ENCODE measurements at regions of chr9 and their contacts with region 1.

Region 1: GRCh38 chr9:4548811-4549725 is 58.8 kb downstream of the SLC1A1 start:
- DNase-seq: peak; percentile 10
- ATAC-seq: peak; percentile 97
- H3K4me3 ChIP-seq: no peak overlapping the region
- H3K27ac ChIP-seq: no peak overlapping the region
- H3K4me1 ChIP-seq: no peaks in the 10 kb centered on the region
- H3K27me3 ChIP-seq: no peaks in the 10 kb centered on the region; a peak in 1 of 5 replicates
- CTCF ChIP-seq: peak; percentile 59
- EP300 ChIP-seq: no peak
- POLR2A ChIP-seq: no peak
- RAD21 ChIP-seq: peak; percentile 52; the same call in 1 of the 2 replicates

Region 2: DNA sequence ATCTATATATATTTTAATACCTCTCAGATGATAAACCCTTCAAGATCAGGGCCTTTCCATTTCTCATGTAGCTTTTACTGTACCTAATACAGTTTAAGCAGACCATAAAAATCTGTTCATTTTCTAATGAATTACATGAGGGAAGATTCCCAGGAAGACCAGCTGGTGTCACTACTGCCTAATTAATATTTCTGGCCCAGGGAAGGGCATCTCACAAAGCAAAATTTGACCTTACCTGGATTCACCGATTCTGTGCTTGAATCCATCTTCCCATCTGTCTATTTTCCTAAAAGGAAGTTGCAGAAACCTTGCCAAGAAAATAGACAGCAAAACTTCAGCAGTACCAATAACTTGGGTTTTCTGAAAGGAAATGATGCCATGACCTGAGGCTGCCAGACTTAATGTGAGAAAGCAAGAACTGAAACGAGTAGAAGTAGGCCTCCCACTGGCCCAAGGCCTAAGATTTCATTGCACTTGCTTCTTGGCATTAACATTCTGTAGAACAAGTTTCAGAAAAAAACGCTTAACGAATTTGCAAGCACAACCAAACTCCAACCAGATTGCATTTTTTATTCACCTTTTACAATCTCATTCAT is 166.2 kb before region 1 on chr9:
- CTCF ChIA-PET with region 1: interaction called, 3 read pairs
- POLR2A ChIA-PET with region 1: no interaction called
- in situ Hi-C with region 1: loop called (anchors 10 kb)
- intact Hi-C with region 1: loop called (anchors 5 kb)
- DNase-seq: no peak
- ATAC-seq: no peak
- H3K4me3 ChIP-seq: no peak overlapping the region
- H3K27ac ChIP-seq: no peak overlapping the region
- H3K4me1 ChIP-seq: no peaks in the 10 kb centered on the region
- H3K27me3 ChIP-seq: peaks cover 1 to 5% of the 10 kb centered on the region in 2 experiments; a peak in 2 of 5 replicates
- CTCF ChIP-seq: peak; percentile 48
- EP300 ChIP-seq: no peak
- POLR2A ChIP-seq: no peak
- RAD21 ChIP-seq: no peak

Region 3: DNA sequence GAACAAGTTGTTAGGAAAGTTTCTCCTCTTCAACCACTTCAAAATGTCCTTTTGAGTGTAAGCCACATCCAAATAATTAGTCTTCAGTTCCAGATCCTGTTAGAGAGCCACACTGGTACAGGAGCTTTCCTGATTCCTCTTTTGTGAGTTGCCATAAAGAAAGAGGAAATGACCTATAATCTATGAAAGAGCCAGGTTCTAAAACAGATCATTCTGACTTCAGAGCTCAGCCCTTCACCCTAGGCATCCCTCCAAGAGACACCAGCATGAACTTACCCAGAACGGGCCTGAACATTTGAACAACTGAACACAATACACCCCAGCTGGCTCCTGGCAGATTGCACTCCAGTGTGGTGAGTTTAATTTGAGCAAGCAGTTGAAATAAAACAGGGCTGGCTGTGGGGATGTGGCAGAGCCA is 33.1 kb before region 1 on chr9:
- CTCF ChIA-PET with region 1: no interaction called
- POLR2A ChIA-PET with region 1: no interaction called
- in situ Hi-C with region 1: no loop called
- intact Hi-C with region 1: no loop called
- DNase-seq: no peak
- ATAC-seq: no peak
- H3K4me3 ChIP-seq: no peak overlapping the region
- H3K27ac ChIP-seq: no peak overlapping the region
- H3K4me1 ChIP-seq: no peaks in the 10 kb centered on the region
- H3K27me3 ChIP-seq: no peaks in the 10 kb centered on the region
- CTCF ChIP-seq: no peak
- EP300 ChIP-seq: no peak
- POLR2A ChIP-seq: no peak
- RAD21 ChIP-seq: no peak

Region 4: GRCh38 chr9:4530375-4530774 is 18.7 kb before region 1 on chr9:
- CTCF ChIA-PET with region 1: no interaction called
- POLR2A ChIA-PET with region 1: no interaction called
- in situ Hi-C with region 1: no loop called
- intact Hi-C with region 1: no loop called
- DNase-seq: no peak
- ATAC-seq: no peak
- H3K4me3 ChIP-seq: no peak overlapping the region
- H3K27ac ChIP-seq: no peak overlapping the region
- H3K4me1 ChIP-seq: no peaks in the 10 kb centered on the region
- H3K27me3 ChIP-seq: no peaks in the 10 kb centered on the region
- CTCF ChIP-seq: no peak
- EP300 ChIP-seq: no peak; a peak in 1 of 4 replicates
- POLR2A ChIP-seq: no peak
- RAD21 ChIP-seq: no peak

Region 5: DNA sequence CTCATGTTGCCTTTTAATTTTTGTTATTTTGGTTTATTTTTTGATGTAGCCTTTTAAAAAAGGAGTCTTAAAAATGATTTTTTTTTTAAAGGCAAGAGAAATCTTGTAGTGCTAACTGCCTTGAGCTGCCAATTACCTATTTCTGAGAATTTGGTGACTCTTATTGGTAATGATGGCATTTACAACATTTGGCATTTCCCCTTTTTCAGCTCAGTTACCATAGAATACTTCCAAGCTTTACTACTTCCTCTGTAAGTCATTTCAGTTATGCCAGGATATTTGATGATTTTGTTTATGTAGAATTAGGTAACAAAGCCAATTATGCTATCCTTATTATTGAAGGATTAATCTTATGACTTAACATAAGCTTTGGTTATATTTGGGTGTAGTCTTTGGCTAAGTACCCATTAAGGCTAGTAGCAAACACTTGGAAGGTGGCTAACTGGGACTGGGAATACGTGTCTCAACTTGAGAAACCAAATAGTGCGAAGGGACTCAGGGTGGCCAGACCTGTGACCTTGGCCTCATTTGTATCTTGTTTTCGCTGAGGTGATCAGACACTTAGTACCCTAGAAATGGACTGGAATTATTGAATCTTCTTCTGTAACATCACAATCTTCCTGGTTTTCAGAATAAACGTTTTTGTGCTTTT is 158.0 kb after region 1 on chr9:
- CTCF ChIA-PET with region 1: no interaction called
- POLR2A ChIA-PET with region 1: no interaction called
- in situ Hi-C with region 1: no loop called
- intact Hi-C with region 1: no loop called
- DNase-seq: no peak
- ATAC-seq: no peak
- H3K4me3 ChIP-seq: no peak overlapping the region
- H3K27ac ChIP-seq: no peak overlapping the region
- H3K4me1 ChIP-seq: no peaks in the 10 kb centered on the region
- H3K27me3 ChIP-seq: no peaks in the 10 kb centered on the region
- CTCF ChIP-seq: no peak
- EP300 ChIP-seq: no peak
- POLR2A ChIP-seq: no peak
- RAD21 ChIP-seq: no peak

Measured in HepG2 (cell line).